Posterior vena cava (tissue), 2 donors: ENCODE measurements at regions of chr9 and their contacts with region 1.

Region 1: DNA sequence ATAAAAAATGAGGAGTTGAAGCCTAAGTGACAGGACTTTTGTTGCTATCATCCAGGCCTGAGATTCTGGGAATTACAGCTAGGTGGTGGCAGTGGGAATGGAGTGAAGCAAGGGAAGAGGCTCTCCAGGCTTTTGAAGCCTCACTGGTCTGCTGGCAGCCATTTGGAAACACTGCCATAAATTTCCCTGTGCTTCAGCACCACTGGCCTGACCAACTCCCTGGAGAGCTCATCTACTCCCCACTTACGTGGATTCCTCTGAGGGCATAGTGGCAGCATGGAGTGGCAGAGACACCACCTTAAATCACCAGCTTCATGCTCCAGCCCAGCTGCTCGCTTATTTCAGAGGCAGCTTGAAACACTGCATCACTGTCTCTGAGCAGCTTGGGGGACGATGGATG is 518.2 kb downstream of the TLR4 start:
- DNase-seq: no peak

Region 2: DNA sequence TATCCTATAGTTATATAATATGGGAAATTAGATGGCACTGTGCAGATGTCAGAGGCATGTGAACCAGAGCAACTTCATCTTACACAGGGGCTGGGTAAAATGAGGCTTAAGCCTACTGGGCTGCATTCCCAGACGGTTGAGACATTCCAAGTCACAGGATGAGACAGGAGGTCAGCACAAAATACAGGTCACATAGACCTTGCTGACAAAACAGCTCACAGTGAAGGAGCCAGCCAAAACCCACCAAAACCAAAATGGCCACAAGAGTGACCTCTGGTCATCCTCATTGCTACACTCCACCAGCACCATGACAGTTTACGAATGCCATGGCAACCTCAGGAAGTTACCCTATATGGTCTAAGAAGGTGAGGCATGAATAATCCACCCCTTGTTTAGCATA is 38.8 kb before region 1 on chr9:
- intact Hi-C with region 1: no loop called
- DNase-seq: no peak

Region 3: DNA sequence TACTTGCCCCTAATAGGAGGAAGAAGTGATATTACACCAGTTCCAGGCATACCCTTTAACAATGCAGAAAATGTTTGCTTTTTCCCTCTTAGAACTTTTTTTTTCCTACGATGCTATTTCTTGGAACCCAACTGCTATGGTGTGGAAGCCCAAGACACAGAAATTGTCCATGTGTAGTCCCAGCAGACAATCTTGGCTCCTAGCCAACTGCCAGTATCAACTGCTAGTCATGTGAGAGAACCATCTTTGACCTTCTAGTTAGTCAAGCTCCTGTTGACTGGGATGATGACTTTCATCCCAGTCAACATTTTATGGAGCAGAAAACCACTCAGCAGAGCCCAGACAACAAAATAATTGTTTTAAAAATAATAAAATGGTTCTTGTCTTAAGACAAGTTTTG is 14.2 kb after region 1 on chr9:
- intact Hi-C with region 1: no loop called
- DNase-seq: no peak

Region 4: DNA sequence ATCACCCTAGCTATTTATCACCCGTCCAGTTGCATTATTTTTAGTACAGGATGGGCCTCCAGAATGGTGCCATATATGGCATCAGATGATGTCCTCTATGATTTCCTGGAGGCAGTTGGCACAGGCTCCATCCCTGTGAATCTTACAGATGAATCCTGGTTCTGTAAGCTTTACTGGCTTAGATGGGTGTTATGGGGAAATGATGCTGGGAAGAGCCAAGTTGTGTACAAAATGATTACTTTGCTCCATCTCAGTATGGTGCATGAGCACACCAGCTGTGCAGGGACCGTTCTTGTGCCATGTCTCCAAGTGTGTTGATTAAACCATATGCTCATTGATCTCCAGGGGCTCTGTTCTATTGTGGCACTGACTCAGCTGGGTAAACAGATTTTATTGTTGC is 237.5 kb after region 1 on chr9:
- intact Hi-C with region 1: loop called in 1 of 2 experiments (anchors 10 kb)
- DNase-seq: no peak

Region 5: DNA sequence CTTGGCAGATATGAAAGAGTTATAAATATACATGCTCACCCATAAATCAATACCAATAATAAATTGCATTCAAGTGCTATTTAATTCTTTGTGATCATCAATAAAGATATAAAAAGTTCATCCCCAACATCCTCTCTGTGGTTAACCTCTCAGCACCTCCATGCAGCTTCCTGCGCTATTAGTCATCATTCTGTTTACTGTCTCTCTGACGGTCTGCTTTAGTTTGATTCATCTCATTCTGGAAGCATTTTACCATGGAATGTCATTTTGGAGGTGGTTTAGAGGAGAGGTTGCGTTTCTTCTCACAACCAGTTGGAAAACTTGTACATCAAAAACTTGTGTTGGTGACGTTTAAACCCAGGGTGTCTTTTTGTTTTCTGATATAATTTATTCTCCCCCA is 660.3 kb after region 1 on chr9:
- intact Hi-C with region 1: no loop called
- DNase-seq: no peak